ENCODE measurements at regions of chr3 and their contacts with region 1.

Region 1: GRCh38 chr3:58008140-58009025 is at the start of gene FLNB:
- DNase-seq: no peak
- ATAC-seq: peak; percentile 81
- H3K4me3 ChIP-seq: peak within 1 kb of the TSS; percentile 77
- H3K27ac ChIP-seq: peak within 1 kb of the TSS; percentile 45
- H3K4me1 ChIP-seq: peaks cover 16% of the 10 kb centered on the region
- H3K27me3 ChIP-seq: no peaks in the 10 kb centered on the region
- CTCF ChIP-seq: peak; percentile 72 to 95 (median 90)
- EP300 ChIP-seq: no peak
- POLR2A ChIP-seq: peak; percentile 90
- RAD21 ChIP-seq: peak; percentile 91
- polyA plus RNA-seq, gene FLNB: 13.6 to 15.8 TPM

Region 2: GRCh38 chr3:57715686-57716085 is 292.7 kb before region 1 on chr3:
- CTCF ChIA-PET with region 1: no interaction called
- POLR2A ChIA-PET with region 1: no interaction called
- RAD21 ChIA-PET with region 1: no interaction called
- SMC1A ChIA-PET with region 1: no interaction called
- in situ Hi-C with region 1: no loop called
- intact Hi-C with region 1: no loop called
- DNase-seq: no peak
- ATAC-seq: no peak
- H3K4me3 ChIP-seq: no peak overlapping the region
- H3K27ac ChIP-seq: no peak overlapping the region
- H3K4me1 ChIP-seq: no peaks in the 10 kb centered on the region
- H3K27me3 ChIP-seq: no peaks in the 10 kb centered on the region
- CTCF ChIP-seq: no peak
- EP300 ChIP-seq: no peak
- POLR2A ChIP-seq: no peak
- RAD21 ChIP-seq: no peak

Region 3: GRCh38 chr3:57755668-57756527 is 252.5 kb before region 1 on chr3 and contains the start of gene SLMAP:
- CTCF ChIA-PET with region 1: no interaction called
- POLR2A ChIA-PET with region 1: no interaction called
- RAD21 ChIA-PET with region 1: no interaction called
- SMC1A ChIA-PET with region 1: no interaction called
- in situ Hi-C with region 1: no loop called
- intact Hi-C with region 1: no loop called
- DNase-seq: peak; percentile 90
- ATAC-seq: peak; percentile 95
- H3K4me3 ChIP-seq: peak within 1 kb of the TSS; percentile 77
- H3K27ac ChIP-seq: peak within 1 kb of the TSS; percentile 91
- H3K4me1 ChIP-seq: peaks cover 6% of the 10 kb centered on the region; the same call in 1 of the 2 replicates
- H3K27me3 ChIP-seq: no peaks in the 10 kb centered on the region
- CTCF ChIP-seq: no peak
- EP300 ChIP-seq: 0 out of 4 replicates have a peak, but pooled peaks of 1 of the 2 experiments have one; percentile 30
- POLR2A ChIP-seq: peak; percentile 98
- RAD21 ChIP-seq: no peak
- polyA plus RNA-seq, gene SLMAP: 8.3 to 10.4 TPM

Region 4: GRCh38 chr3:57961828-57962447 is 46.4 kb before region 1 on chr3:
- CTCF ChIA-PET with region 1: interaction called, 13 read pairs
- POLR2A ChIA-PET with region 1: interaction called, 4 read pairs
- RAD21 ChIA-PET with region 1: interaction called, 3 read pairs
- SMC1A ChIA-PET with region 1: interaction called, 6 read pairs
- in situ Hi-C with region 1: no loop called
- intact Hi-C with region 1: no loop called
- DNase-seq: no peak
- ATAC-seq: peak; percentile 57
- H3K4me3 ChIP-seq: no peak overlapping the region
- H3K27ac ChIP-seq: no peak overlapping the region
- H3K4me1 ChIP-seq: peaks cover 14% of the 10 kb centered on the region
- H3K27me3 ChIP-seq: no peaks in the 10 kb centered on the region
- CTCF ChIP-seq: peak; percentile 28 to 49 (median 40); a peak in 4 of 6 replicates
- EP300 ChIP-seq: no peak
- POLR2A ChIP-seq: no peak
- RAD21 ChIP-seq: peak; percentile 61

Region 5: DNA sequence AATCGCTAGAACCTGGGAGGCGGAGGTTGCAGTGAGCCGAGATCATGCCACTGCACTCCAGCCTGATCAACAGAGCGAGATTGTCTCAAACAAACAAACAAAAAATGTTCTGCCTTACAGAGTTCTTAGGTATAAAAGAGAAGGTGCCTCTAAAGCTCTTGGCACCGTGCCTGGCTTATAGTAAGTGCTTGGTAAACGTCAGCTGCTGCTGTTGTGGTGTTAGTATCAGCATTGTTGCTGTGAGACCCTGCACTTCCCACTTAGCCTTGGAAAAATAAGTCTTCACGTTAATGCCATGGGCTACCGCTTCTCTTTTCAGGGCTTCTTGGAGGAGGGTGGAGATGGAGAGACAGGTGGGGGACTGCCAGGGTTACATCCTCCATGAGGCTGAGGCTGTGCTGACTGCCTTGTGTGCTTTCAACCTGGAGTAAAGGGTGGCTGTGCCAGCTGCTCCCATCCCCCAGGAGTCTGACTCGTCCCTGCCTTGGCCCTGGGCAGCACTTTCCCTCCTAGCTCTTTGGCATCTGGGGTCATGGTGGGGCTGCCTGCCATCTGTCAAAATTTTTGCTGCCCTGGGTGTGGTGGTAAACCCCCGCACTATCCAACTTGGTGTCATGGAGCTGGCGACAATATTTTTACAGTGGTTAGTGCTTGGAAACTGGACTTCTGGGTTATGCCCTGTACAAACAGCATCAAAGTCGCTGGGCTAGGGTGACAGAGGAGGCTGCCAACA is 17.6 kb after region 1 on chr3:
- CTCF ChIA-PET with region 1: interaction called, 88 read pairs
- POLR2A ChIA-PET with region 1: interaction called, 6 read pairs
- RAD21 ChIA-PET with region 1: interaction called, 110 read pairs
- SMC1A ChIA-PET with region 1: interaction called, 35 read pairs
- in situ Hi-C with region 1: no loop called
- intact Hi-C with region 1: no loop called
- DNase-seq: no peak
- ATAC-seq: no peak
- H3K4me3 ChIP-seq: no peak overlapping the region
- H3K27ac ChIP-seq: no peak overlapping the region
- H3K4me1 ChIP-seq: peaks cover 13% of the 10 kb centered on the region
- H3K27me3 ChIP-seq: no peaks in the 10 kb centered on the region
- CTCF ChIP-seq: no peak
- EP300 ChIP-seq: no peak
- POLR2A ChIP-seq: no peak
- RAD21 ChIP-seq: no peak

Region 6: GRCh38 chr3:58084788-58085543 is 76.6 kb after region 1 on chr3:
- CTCF ChIA-PET with region 1: interaction called, 4 read pairs
- POLR2A ChIA-PET with region 1: interaction called, 5 read pairs
- RAD21 ChIA-PET with region 1: interaction called, 4 read pairs
- SMC1A ChIA-PET with region 1: interaction called, 8 read pairs
- in situ Hi-C with region 1: no loop called
- intact Hi-C with region 1: loop called (anchors 2 kb)
- DNase-seq: peak; percentile 40
- ATAC-seq: peak; percentile 97
- H3K4me3 ChIP-seq: no peak overlapping the region
- H3K27ac ChIP-seq: peak overlapping the region; percentile 28; the same call in 1 of the 2 replicates
- H3K4me1 ChIP-seq: peaks cover 21% of the 10 kb centered on the region
- H3K27me3 ChIP-seq: no peaks in the 10 kb centered on the region
- CTCF ChIP-seq: no peak
- EP300 ChIP-seq: peak; percentile 12 to 53; a peak in 2 of 4 replicates
- POLR2A ChIP-seq: no peak
- RAD21 ChIP-seq: no peak

Measured in GM12878 (cell line).